ENCODE measurements at regions of chr3 and their contacts with region 1.

Region 1: DNA sequence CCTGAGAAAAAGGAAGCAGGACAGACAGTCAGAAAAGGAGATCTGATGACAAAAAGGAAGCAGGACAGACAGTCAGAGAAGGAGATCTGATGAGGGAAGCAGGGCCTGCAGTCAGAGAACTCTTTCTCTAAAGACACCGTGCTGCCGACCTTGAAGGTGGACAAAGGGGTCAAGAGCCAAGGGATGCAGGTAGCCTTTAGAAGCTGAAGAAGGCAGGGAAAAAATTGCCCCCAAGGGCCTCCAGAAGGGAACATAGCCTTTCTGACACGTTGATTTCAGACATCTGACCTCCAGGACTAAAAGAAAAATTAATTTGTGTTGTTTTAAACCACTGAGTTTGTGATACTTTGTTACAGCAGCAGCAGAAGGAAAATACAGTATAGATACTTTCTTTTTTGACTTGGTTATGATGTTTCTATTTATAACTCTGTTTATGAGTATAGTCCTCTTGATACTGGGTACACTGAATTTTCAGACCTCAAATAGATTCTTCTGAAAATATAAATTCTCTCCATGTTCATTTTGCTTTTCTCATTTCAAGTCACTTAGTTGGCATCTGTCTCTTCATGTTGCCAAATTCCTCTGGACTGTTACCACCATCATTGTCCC is 44.5 kb upstream of the ST3GAL6 start:
- DNase-seq: no peak
- CTCF ChIP-seq: no peak

Region 2: GRCh38 chr3:98440283-98440942 is 278.2 kb before region 1 on chr3:
- CTCF ChIA-PET with region 1: no interaction called
- POLR2A ChIA-PET with region 1: no interaction called
- DNase-seq: no peak
- CTCF ChIP-seq: no peak

Region 3: DNA sequence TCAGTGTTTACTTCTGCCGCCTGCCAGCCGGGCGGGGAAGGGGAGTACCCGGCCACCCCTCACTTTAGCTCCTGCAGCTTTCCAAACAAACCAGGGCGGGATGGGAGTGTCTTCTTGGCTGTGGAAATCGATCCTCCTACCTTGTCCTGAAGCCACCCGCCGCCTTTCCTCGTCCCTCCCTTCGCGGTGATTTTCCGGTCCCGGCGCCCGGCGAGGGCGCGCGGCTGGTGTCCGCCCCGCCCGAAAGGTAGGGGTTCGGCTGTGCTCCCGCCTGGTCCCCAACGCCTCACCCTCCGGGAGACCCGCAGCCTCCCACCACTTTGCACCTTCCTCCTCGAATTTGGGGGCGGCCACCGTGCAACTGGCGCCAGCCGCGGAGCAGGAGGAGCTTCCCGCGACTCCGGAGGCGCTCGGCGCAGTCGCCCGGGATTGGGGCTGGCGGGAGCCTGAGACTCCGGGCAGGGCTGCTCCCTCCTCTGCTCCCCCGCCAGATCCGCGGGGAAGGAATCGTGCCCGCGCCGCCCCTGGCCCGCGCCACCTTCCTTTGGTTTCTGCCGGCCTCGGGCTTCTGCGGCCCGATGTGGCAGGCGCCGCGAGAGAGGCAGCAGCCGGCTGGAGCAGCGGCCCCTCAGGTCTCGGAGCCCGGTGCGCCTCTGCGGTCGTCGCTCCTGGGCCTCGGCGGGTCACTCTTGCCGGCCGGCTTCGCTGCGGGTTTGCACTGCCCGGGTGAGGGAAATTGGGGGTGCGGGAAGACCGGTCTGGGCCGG is 13.8 kb after region 1 on chr3:
- CTCF ChIA-PET with region 1: interaction called, 12 read pairs
- POLR2A ChIA-PET with region 1: no interaction called
- DNase-seq: peak; percentile 45
- CTCF ChIP-seq: no peak